Right lobe of liver (tissue), 6 donors: ENCODE measurements at regions of chr22 and their contacts with region 1.

Region 1: DNA sequence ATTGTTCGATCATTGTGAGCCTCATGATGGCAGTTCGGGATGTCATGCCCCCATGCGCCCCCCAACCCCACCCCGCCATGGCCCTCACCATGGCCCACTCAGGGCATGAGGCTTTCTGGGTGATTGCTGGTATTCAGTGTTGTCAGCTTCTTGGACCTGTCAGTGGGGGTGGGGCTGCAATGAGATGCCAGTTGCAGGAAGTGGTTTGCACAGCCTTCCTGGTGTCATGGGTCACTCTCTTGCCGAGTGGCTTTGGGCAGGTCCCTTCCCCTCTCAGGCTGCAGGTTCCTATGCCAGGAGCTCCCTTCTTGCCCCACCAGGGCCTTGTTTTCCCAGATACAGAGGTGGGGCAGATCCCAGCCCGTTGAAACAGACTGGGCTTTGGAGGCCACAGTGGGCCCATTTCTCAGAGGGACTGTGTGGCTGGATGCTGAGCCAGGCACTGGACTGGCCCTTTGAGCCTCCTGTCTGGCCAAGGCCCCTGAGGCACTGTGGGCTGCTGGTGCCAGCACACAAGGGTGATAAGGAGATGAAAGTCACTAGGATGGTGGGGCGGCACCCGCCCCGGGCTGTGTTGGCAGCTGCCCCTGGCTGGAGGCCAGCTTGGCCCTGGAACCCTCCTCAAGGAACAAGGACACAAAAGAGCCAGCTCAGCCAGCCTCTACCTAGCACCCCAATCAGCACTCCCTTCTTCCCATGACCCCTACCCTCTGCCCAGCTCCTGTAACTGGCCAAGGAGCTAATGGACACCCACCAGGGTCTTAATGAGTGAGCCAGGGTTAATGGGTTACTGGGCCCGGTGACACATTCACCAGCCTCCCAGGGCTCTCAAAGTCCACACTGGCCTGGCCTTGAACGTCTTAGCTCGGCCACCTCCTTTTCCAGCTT is 1.5 kb upstream of the GGT1 start:
- DNase-seq: peak; percentile 83 to 93 (median 92)
- ATAC-seq: peak; percentile 74 to 84 (median 82)
- H3K4me3 ChIP-seq: no peak overlapping the region
- H3K27ac ChIP-seq: peak overlapping the region; percentile 29 to 89 (median 58)
- H3K4me1 ChIP-seq: peaks cover 0 to 33% (median 8%) of the 10 kb centered on the region in 4 donors
- H3K27me3 ChIP-seq: no peaks in the 10 kb centered on the region
- CTCF ChIP-seq: no peak
- POLR2A ChIP-seq: no peak

Region 2: DNA sequence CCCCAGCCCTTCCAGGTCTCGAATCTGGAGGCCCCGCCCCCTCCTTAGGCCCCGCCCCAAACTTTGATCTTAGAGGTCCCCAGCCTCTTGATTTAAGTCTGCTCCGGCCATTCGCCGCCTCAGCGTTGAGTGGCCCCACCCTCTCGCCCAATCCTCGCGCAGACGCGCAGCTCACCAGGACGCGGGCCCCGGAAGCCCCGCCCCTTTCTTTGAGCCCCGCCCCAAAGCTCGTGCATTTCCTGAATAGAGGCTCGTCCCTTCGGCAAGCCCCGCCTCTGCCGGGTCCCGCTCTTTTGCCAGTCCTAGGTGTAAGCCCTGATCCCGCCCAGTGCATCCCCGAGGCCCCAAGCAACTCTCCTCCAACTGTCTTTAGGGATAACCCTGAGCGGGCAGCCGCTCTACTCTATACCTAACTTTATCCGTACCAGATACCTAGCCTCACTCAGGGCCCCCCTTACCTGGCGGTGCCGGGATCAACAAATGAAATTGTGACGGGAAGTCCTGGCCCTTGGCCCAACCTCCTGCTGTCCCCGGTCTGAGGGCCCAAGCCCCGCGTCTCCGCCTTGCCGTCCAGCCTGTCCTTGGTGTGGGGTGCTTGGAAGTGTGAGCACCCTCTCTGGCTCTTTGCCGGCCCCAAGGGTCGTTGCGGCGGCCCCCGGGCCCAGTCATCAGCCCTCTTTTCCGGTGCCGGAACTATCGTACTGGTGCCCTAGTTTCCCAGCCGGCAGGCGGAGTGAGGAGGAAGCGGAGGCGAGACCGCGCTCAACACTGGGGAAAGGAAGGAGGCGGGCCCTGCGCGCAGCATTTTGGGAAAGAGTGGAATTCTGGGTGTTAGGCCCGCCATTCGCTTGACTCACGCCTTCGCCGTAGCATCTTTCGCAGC is 46.1 kb before region 1 on chr22 and contains the start of gene SNRPD3:
- intact Hi-C with region 1: loop called in 1 of 2 experiments (anchors 10 kb)
- DNase-seq: peak; percentile 100
- ATAC-seq: peak; percentile 77 to 86 (median 81)
- H3K4me3 ChIP-seq: peak within 1 kb of the TSS; percentile 94 to 100 (median 98)
- H3K27ac ChIP-seq: peak within 1 kb of the TSS; percentile 96 to 99 (median 97)
- H3K4me1 ChIP-seq: peaks cover 0 to 51% (median 18%) of the 10 kb centered on the region in 4 donors
- H3K27me3 ChIP-seq: no peaks in the 10 kb centered on the region
- CTCF ChIP-seq: peak in 2 of 4 donors; percentile 11 to 26
- POLR2A ChIP-seq: peak; percentile 78
- total RNA-seq, gene SNRPD3: 43.3 to 180 (median 53.4) TPM

Region 3: DNA sequence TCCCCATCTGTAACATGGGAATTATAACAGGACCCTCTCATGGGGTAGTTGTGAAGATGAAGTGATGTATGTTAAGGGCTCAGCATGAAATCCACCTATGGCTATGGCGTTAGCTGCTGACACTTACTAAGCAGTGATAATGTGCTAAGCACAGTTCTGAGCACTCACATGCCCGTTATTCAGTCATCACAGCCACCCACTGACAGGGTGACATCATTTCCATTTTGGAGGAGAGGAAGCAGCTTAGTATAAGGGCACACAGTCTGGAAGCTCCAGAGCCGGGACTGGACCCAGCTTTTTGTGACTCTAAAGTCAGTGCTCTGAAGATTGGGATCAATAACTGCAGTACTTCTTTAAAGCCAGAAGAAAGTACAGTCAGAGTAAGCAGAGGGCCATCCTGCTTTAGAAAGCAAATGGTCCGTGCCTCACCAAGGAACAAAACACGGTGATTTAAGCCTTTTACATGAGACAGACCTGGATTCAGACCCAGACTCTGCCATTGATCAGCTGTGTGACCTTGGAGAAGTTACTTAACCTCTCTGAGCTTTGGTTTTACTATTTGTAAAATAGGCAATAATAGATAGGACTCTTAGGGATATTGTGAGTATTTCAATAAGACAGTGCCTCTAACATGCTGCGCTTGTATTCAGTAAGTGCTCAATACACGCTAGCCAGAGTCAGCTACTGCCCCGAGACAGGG is 266.0 kb after region 1 on chr22:
- intact Hi-C with region 1: no loop called
- DNase-seq: no peak
- ATAC-seq: no peak
- H3K4me3 ChIP-seq: no peak overlapping the region
- H3K27ac ChIP-seq: no peak overlapping the region
- H3K4me1 ChIP-seq: no peaks in the 10 kb centered on the region
- H3K27me3 ChIP-seq: no peaks in the 10 kb centered on the region
- CTCF ChIP-seq: no peak
- POLR2A ChIP-seq: no peak